Aorta (tissue), 5 donors: ENCODE measurements at regions of chr1 and their contacts with region 1.

Region 1: GRCh38 chr1:70134148-70134547 is 71.2 kb downstream of the LRRC40 start:
- DNase-seq: no peak
- ATAC-seq: no peak
- H3K4me3 ChIP-seq: no peak overlapping the region
- H3K27ac ChIP-seq: no peak overlapping the region
- H3K4me1 ChIP-seq: no peaks in the 10 kb centered on the region
- H3K27me3 ChIP-seq: no peaks in the 10 kb centered on the region

Region 2: GRCh38 chr1:70348399-70349165 is 214.4 kb after region 1 on chr1:
- intact Hi-C with region 1: no loop called
- DNase-seq: no peak
- ATAC-seq: no peak
- H3K4me3 ChIP-seq: no peak overlapping the region
- H3K27ac ChIP-seq: no peak overlapping the region
- H3K4me1 ChIP-seq: peaks cover 0 to 2% of the 10 kb centered on the region in 2 donors
- H3K27me3 ChIP-seq: no peaks in the 10 kb centered on the region

Region 3: DNA sequence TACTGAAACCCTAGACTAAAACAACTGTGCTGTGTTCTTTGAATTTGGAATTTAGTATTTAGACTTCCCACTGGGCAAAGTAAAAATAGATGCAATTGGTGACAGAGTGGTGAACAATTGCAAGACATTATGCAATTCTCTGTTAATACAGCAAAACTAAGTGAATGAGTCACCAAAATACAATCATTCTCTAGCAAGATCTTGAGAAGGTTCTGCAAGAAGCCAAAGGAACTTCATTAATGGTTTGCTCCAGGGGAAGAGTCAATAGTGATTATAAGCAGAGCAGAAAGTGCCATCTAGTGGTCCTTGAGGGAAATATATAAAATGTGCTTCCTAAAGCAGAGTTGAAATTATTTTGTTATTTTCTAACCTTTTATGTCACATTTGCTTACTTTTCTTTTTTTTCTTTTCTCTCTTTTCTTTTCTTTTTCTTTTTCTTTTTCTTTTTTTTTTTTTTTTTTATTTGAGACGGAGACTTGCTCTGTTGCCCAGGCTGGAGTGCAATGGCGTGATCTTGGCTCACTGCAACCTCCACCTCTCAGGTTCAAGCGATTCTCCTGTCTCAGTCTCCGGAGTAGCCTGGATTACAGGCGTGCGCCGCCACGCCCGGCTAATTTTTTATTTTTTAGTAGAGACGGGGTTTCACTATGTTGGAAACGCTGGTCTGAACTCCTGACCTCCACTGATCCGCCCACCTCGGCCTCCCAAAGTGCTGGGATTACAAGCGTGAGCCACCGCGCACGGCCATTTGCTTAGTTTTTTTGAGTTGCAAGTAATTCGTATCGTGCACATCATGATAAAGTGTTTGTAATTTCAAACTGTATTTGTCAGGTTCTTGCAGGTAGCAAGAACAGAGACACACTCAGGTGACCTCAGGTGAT is 376.1 kb after region 1 on chr1:
- intact Hi-C with region 1: loop called (anchors 5 kb)
- DNase-seq: peak in 1 of 2 donors; percentile 45
- ATAC-seq: peak; percentile 88
- H3K4me3 ChIP-seq: no peak overlapping the region
- H3K27ac ChIP-seq: no peak overlapping the region
- H3K4me1 ChIP-seq: no peaks in the 10 kb centered on the region
- H3K27me3 ChIP-seq: no peaks in the 10 kb centered on the region